CD4-positive, alpha-beta T cell (primary cell): ENCODE measurements at regions of chr1 and their contacts with region 1.

Region 1: DNA sequence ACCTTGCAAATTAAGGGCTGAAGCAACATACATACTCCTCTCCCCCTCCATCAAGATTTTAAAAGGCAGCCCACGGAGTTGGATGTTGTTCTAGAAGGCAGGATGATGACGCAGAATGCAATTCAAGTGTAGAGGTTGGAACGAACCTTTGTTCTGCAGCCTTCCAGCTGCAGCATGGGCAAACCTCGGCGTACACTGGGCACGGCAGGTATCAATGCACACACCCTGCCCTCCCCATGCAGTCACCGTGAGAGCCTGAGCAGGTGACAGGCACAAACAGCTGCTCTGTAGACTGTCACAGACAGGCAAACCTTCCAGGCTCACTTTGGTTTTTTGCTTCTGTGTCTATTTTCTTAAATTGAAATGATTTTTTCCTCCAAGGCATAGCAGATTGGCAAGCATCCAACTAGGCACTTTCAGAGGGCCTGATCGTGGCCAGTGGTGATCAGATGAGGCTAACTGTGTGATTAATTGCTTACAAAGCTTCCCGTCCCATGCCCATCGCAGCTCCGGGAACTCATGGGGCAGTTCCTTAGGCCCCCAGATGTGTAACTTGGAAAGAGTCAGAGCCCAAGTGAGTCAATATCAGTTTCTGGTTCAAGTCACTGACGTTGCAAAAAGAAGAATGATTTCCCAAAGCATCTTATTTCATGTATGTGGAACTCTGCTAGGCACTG is 82.3 kb downstream of the ITPKB start:
- DNase-seq: peak in 13 of 14 experiments; percentile 33 to 90 (median 61)
- ATAC-seq: peak; percentile 77
- H3K4me3 ChIP-seq: no peak overlapping the region
- H3K4me3 Mint-ChIP-seq: peak overlapping the region; percentile 79
- H3K27ac ChIP-seq: peak overlapping the region in 1 of 2 donors; percentile 47
- H3K27ac Mint-ChIP-seq: no peak overlapping the region
- H3K4me1 ChIP-seq: no peaks in the 10 kb centered on the region
- H3K4me1 Mint-ChIP-seq: no peaks in the 10 kb centered on the region
- H3K27me3 ChIP-seq: no peaks in the 10 kb centered on the region
- H3K27me3 Mint-ChIP-seq: no peaks in the 10 kb centered on the region
- CTCF ChIP-seq: no peak

Region 2: DNA sequence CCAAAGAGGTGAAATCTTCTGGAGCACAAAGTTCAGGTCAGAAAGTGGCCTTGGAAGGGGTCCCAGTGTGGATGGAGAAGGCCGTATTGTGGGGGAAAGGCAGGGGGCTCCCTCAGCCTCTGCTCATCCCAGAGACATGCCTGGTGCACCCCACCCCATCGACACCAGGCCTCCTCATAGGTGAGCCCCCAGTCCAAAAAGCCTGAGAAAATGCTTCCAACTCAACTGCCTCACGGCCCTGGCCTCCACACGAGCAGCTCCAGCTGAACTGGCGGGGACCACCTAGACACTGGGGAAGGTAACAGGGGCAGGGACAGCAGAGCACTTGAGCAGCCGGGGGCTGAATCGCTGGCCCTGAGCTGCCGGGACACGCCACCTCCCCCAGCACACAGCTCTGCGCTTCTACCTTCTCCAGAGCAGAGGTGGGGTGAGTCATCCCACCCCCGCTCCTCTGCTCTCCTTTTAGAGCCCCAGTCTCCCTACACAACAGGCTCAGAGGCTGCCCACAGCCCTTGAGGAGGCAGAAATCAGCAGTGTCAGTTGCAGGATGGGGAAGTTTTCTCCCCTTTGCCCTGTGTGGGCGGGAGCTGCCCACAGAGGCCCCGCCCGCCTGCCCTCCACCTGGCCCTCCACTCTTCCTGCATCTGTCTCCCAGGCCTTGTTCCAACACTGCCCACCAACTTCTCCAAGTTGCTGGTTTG is 13.7 kb before region 1 on chr1:
- CTCF ChIA-PET with region 1: interaction called, 4 read pairs
- POLR2A ChIA-PET with region 1: interaction called, 18 read pairs
- intact Hi-C with region 1: no loop called
- DNase-seq: peak in 11 of 14 experiments; percentile 35 to 79 (median 58)
- ATAC-seq: peak; percentile 75
- H3K4me3 ChIP-seq: no peak overlapping the region
- H3K4me3 Mint-ChIP-seq: peak overlapping the region; percentile 75
- H3K27ac ChIP-seq: peak overlapping the region; percentile 41 to 73
- H3K27ac Mint-ChIP-seq: no peak overlapping the region
- H3K4me1 ChIP-seq: peaks cover 78% of the 10 kb centered on the region
- H3K4me1 Mint-ChIP-seq: peaks cover 51% of the 10 kb centered on the region
- H3K27me3 ChIP-seq: no peaks in the 10 kb centered on the region
- H3K27me3 Mint-ChIP-seq: no peaks in the 10 kb centered on the region
- CTCF ChIP-seq: no peak

Region 3: GRCh38 chr1:226671290-226671689 is 14.6 kb after region 1 on chr1:
- CTCF ChIA-PET with region 1: interaction called, 17 read pairs
- POLR2A ChIA-PET with region 1: interaction called, 40 read pairs
- intact Hi-C with region 1: loop called in 1 of 2 experiments (anchors 2 kb)
- DNase-seq: no peak
- ATAC-seq: no peak
- H3K4me3 ChIP-seq: no peak overlapping the region
- H3K4me3 Mint-ChIP-seq: peak overlapping the region; percentile 20
- H3K27ac ChIP-seq: peak overlapping the region in 1 of 2 donors; percentile 42
- H3K27ac Mint-ChIP-seq: peak overlapping the region; percentile 98
- H3K4me1 ChIP-seq: peaks cover 62% of the 10 kb centered on the region
- H3K4me1 Mint-ChIP-seq: peaks cover 65% of the 10 kb centered on the region
- H3K27me3 ChIP-seq: no peaks in the 10 kb centered on the region
- H3K27me3 Mint-ChIP-seq: no peaks in the 10 kb centered on the region
- CTCF ChIP-seq: no peak

Region 4: DNA sequence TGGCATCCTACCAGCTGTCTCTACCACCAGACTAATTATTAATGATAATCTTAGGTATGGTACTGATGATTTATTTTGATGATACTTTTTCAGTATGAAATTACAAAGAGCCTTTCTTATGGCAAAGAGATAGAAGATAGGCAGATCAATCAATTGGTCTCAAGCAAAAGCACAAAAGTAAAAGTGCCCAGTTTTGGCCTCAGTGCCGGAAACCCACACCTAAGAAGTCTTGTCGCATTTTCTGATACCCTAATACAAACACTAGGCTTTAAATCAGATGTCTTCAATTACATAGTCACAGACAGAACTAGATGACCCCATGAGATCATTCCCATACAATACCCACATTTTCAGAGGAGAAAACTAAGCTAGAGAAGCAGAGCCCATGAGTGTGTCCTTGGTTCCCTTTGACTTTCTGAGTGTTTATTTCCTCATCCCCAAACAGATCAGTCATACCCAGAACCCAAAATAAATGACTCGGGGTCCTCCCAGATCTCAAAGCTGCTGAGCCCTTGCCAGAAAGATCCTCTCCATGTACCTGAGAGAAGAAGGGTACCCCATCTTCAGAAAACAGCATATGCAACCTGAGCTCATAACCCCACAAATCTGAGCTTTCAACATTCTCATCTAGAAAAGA is 74.6 kb after region 1 on chr1:
- CTCF ChIA-PET with region 1: no interaction called
- POLR2A ChIA-PET with region 1: interaction called, 26 read pairs
- intact Hi-C with region 1: loop called in 1 of 2 experiments (anchors 5 kb)
- DNase-seq: peak in 1 of 14 experiments; percentile 26
- ATAC-seq: no peak
- H3K4me3 ChIP-seq: peak overlapping the region; percentile 93
- H3K4me3 Mint-ChIP-seq: peak overlapping the region; percentile 95
- H3K27ac ChIP-seq: peak overlapping the region; percentile 60 to 75
- H3K27ac Mint-ChIP-seq: peak overlapping the region; percentile 95
- H3K4me1 ChIP-seq: peaks cover 69% of the 10 kb centered on the region
- H3K4me1 Mint-ChIP-seq: peaks cover 79% of the 10 kb centered on the region
- H3K27me3 ChIP-seq: no peaks in the 10 kb centered on the region
- H3K27me3 Mint-ChIP-seq: no peaks in the 10 kb centered on the region
- CTCF ChIP-seq: no peak